ENCODE measurements at regions of chr9 and their contacts with region 1.

Region 1: GRCh38 chr9:107282753-107283625 is at the start of gene RAD23B:
- DNase-seq: peak; percentile 99
- H3K4me3 Mint-ChIP-seq: peak within 1 kb of the TSS; percentile 96
- H3K27ac Mint-ChIP-seq: peak within 1 kb of the TSS; percentile 95
- H3K4me1 Mint-ChIP-seq: peaks cover 41% of the 10 kb centered on the region
- H3K27me3 Mint-ChIP-seq: no peaks in the 10 kb centered on the region
- total RNA-seq, gene RAD23B: 111 TPM

Region 2: GRCh38 chr9:106753155-106753671 is 529.8 kb before region 1 on chr9:
- CTCF ChIA-PET with region 1: no interaction called
- POLR2A ChIA-PET with region 1: no interaction called
- intact Hi-C with region 1: no loop called
- DNase-seq: no peak
- H3K4me3 Mint-ChIP-seq: no peak overlapping the region
- H3K27ac Mint-ChIP-seq: no peak overlapping the region
- H3K4me1 Mint-ChIP-seq: no peaks in the 10 kb centered on the region
- H3K27me3 Mint-ChIP-seq: no peaks in the 10 kb centered on the region

Region 3: GRCh38 chr9:107243751-107244150 is 39.2 kb before region 1 on chr9:
- CTCF ChIA-PET with region 1: interaction called, 3 read pairs
- POLR2A ChIA-PET with region 1: no interaction called
- intact Hi-C with region 1: loop called (anchors 1 kb)
- DNase-seq: peak; percentile 69
- H3K4me3 Mint-ChIP-seq: peak overlapping the region; percentile 38
- H3K27ac Mint-ChIP-seq: peak overlapping the region; percentile 79
- H3K4me1 Mint-ChIP-seq: peaks cover 26% of the 10 kb centered on the region
- H3K27me3 Mint-ChIP-seq: peaks cover 1% of the 10 kb centered on the region

Region 4: DNA sequence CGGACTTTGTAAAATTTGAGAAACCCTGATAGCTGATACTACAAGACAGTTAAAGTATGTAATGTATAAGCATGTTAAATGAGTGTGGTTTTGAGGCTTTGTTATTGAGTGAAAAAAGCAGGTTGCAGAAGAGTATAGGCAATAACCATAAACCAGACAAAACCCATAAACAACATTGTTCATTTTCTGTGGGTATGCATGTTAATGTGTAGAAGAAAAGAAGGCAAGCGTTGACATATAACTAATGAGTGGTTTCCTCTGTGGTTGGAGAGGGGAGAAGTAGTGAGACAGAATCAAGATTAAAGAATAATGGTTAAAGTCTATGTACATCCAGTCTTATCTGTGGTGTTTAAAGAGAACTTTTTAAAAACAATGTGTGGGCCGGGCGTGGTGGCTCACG is 26.3 kb after region 1 on chr9:
- CTCF ChIA-PET with region 1: interaction called, 3 read pairs
- POLR2A ChIA-PET with region 1: interaction called, 4 read pairs
- intact Hi-C with region 1: loop called (anchors 1 kb)
- DNase-seq: no peak
- H3K4me3 Mint-ChIP-seq: no peak overlapping the region
- H3K27ac Mint-ChIP-seq: peak overlapping the region; percentile 25
- H3K4me1 Mint-ChIP-seq: peaks cover 58% of the 10 kb centered on the region
- H3K27me3 Mint-ChIP-seq: no peaks in the 10 kb centered on the region

Region 5: GRCh38 chr9:107462691-107463090 is 179.7 kb after region 1 on chr9:
- CTCF ChIA-PET with region 1: no interaction called
- POLR2A ChIA-PET with region 1: no interaction called
- intact Hi-C with region 1: no loop called
- DNase-seq: no peak
- H3K4me3 Mint-ChIP-seq: no peak overlapping the region
- H3K27ac Mint-ChIP-seq: no peak overlapping the region
- H3K4me1 Mint-ChIP-seq: peaks cover 4% of the 10 kb centered on the region
- H3K27me3 Mint-ChIP-seq: peaks cover 31% of the 10 kb centered on the region

Region 6: DNA sequence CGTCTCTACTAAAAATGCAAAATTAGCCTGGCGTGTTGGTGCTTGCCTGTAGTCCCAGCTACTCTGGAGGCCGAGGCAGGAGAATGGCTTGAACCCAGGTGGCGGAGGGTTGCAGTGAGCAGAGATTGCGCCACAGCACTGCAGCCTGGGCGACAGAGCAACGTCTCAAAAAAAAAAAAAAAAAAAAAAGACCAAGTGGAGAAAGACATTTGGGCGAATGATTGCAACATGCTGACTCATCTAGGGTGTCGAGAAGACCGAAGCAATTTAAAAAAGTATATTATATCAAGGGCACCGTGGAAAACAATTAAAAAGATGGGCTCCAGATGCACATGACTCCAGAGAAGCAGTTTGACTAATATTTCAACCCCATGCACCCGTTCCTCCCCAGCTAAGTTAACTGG is 197.4 kb after region 1 on chr9:
- CTCF ChIA-PET with region 1: no interaction called
- POLR2A ChIA-PET with region 1: no interaction called
- intact Hi-C with region 1: no loop called
- DNase-seq: no peak
- H3K4me3 Mint-ChIP-seq: no peak overlapping the region
- H3K27ac Mint-ChIP-seq: no peak overlapping the region
- H3K4me1 Mint-ChIP-seq: no peaks in the 10 kb centered on the region
- H3K27me3 Mint-ChIP-seq: peaks cover 16% of the 10 kb centered on the region

Region 7: DNA sequence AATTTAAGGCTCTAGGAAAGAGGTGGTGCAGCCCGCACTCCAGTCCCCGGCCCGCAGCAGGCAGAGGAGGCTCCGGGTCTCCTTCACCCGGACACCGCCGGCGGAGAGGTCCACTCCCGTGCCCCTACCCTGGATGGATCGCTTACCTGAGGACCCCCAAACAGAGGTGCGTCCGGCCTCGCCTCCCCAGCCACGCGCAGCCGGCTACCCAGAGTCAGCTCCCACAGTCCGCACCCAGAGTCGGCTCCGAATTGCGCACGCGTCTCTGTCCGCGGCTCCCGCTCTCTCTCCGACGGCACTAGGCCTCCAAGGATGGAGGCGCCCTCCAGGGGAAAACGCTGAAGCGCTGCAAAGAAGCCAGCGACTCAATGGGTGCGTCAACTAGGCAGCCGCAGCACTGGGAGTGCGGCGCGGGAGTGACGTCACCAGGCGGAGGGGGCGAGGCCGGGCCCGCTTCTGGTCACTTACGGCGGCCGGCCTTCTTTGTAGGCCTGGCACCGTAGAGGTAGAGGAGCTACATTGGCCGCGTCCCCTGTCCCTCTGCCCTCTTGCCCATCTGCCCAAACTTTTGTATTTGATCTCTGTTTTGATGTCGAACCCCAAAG is 1650.8 kb after region 1 on chr9 and contains the start of gene ELP1:
- CTCF ChIA-PET with region 1: no interaction called
- POLR2A ChIA-PET with region 1: no interaction called
- intact Hi-C with region 1: loop called (anchors 5 kb)
- DNase-seq: peak; percentile 95
- H3K4me3 Mint-ChIP-seq: peak within 1 kb of the TSS; percentile 95
- H3K27ac Mint-ChIP-seq: peak within 1 kb of the TSS; percentile 92
- H3K4me1 Mint-ChIP-seq: peaks cover 25% of the 10 kb centered on the region
- H3K27me3 Mint-ChIP-seq: no peaks in the 10 kb centered on the region
- total RNA-seq, gene ELP1: 25.5 to 29.2 TPM

Region 8: GRCh38 chr9:109110326-109111021 is 1827.5 kb after region 1 on chr9:
- CTCF ChIA-PET with region 1: no interaction called
- POLR2A ChIA-PET with region 1: no interaction called
- intact Hi-C with region 1: loop called (anchors 5 kb)
- DNase-seq: no peak
- H3K4me3 Mint-ChIP-seq: peak overlapping the region; percentile 20
- H3K27ac Mint-ChIP-seq: peak overlapping the region; percentile 15
- H3K4me1 Mint-ChIP-seq: peaks cover 81% of the 10 kb centered on the region
- H3K27me3 Mint-ChIP-seq: no peaks in the 10 kb centered on the region

Measured in activated CD4-positive, alpha-beta memory T cell treated with anti-CD3 and anti-CD28 coated beads for 36 hours (primary cell).